Ovary (tissue), 10 donors: ENCODE measurements at regions of chr18 and their contacts with region 1.

Region 1: GRCh38 chr18:9849407-9850281 is 36.1 kb upstream of the TXNDC2 start:
- DNase-seq: no peak
- H3K4me3 ChIP-seq: no peak overlapping the region
- H3K27ac ChIP-seq: no peak overlapping the region
- H3K4me1 ChIP-seq: peaks cover 8% of the 10 kb centered on the region
- H3K27me3 ChIP-seq: no peaks in the 10 kb centered on the region
- CTCF ChIP-seq: no peak
- EP300 ChIP-seq: no peak
- POLR2A ChIP-seq: no peak

Region 2: DNA sequence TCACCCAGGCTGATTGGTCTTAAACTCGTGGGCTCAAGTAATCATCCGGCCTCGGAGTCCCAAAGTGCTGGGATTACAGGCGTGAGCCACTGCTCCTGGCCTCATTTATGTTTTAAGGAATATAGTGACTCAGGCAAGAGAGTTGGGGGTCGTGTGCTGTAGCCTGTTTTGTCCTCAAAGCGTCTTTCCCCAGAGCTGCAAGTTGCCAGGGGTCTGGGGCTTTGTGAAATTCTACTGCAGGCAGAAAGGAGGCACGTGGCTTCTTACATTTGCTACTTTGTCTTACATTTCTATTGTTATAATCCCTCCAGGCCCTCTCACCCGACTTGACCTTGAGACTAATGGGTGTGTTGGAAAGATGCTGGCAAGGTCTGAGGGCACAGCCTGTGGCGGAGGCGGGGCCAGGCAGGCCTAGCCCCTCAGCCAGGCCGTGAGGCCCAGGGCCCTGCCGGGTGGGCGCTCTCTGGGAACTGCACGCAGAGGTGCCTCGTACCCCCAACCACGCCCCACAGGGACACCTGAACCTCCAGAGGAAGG is 832.9 kb before region 1 on chr18:
- intact Hi-C with region 1: no loop called
- DNase-seq: no peak
- H3K4me3 ChIP-seq: peak overlapping the region; percentile 14
- H3K27ac ChIP-seq: peak overlapping the region; percentile 53 to 63
- H3K4me1 ChIP-seq: peaks cover 6% of the 10 kb centered on the region
- H3K27me3 ChIP-seq: no peaks in the 10 kb centered on the region
- CTCF ChIP-seq: no peak
- EP300 ChIP-seq: no peak
- POLR2A ChIP-seq: no peak

Region 3: GRCh38 chr18:9808295-9809241 is 41.1 kb before region 1 on chr18:
- intact Hi-C with region 1: loop called in 1 of 4 experiments (anchors 10 kb)
- DNase-seq: peak in 4 of 5 donors; percentile 50 to 76 (median 52)
- H3K4me3 ChIP-seq: no peak overlapping the region
- H3K27ac ChIP-seq: peak overlapping the region in 1 of 2 donors; percentile 57
- H3K4me1 ChIP-seq: peaks cover 14% of the 10 kb centered on the region
- H3K27me3 ChIP-seq: no peaks in the 10 kb centered on the region
- CTCF ChIP-seq: no peak
- EP300 ChIP-seq: no peak
- POLR2A ChIP-seq: no peak

Region 4: GRCh38 chr18:10006311-10006893 is 156.8 kb after region 1 on chr18:
- intact Hi-C with region 1: no loop called
- DNase-seq: no peak
- H3K4me3 ChIP-seq: no peak overlapping the region
- H3K27ac ChIP-seq: no peak overlapping the region
- H3K4me1 ChIP-seq: peaks cover 6% of the 10 kb centered on the region
- H3K27me3 ChIP-seq: no peaks in the 10 kb centered on the region
- CTCF ChIP-seq: peak in 1 of 3 donors; percentile 22
- EP300 ChIP-seq: no peak
- POLR2A ChIP-seq: no peak